ENCODE measurements at regions of chr1 and their contacts with region 1.

Region 1: GRCh38 chr1:18902523-18903290 is at the start of gene ALDH4A1:
- DNase-seq: peak; percentile 87 to 88
- H3K4me3 ChIP-seq: peak within 1 kb of the TSS; percentile 91 to 96 (median 93)
- H3K27ac ChIP-seq: peak within 1 kb of the TSS; percentile 99
- H3K4me1 ChIP-seq: peaks cover 0 to 5% (median 2%) of the 10 kb centered on the region in 4 experiments; a peak in 5 of 7 replicates
- H3K27me3 ChIP-seq: peaks cover 0 to 3% (median 0%) of the 10 kb centered on the region in 4 experiments; a peak in 4 of 7 replicates
- CTCF ChIP-seq: no peak
- EP300 ChIP-seq: peak in 1 of 2 experiments; percentile 99; a peak in 2 of 3 replicates
- POLR2A ChIP-seq: peak in 1 of 2 experiments; percentile 84; a peak in 2 of 3 replicates
- RAD21 ChIP-seq: no peak
- total RNA-seq, gene ALDH4A1: 29.4 and 30.3 TPM in 2 replicates

Region 2: GRCh38 chr1:18883636-18884418 is 18.9 kb before region 1 on chr1:
- CTCF ChIA-PET with region 1: interaction called, 131 read pairs
- POLR2A ChIA-PET with region 1: interaction called, 5 read pairs
- DNase-seq: peak; percentile 60 to 97
- H3K4me3 ChIP-seq: no peak overlapping the region
- H3K27ac ChIP-seq: no peak overlapping the region
- H3K4me1 ChIP-seq: peaks cover 0 to 6% (median 4%) of the 10 kb centered on the region in 4 experiments; a peak in 4 of 7 replicates
- H3K27me3 ChIP-seq: no peaks in the 10 kb centered on the region
- CTCF ChIP-seq: peak; percentile 84 to 97 (median 93)
- EP300 ChIP-seq: no peak
- POLR2A ChIP-seq: no peak
- RAD21 ChIP-seq: peak; percentile 86 to 92

Region 3: GRCh38 chr1:18941221-18942141 is 38.8 kb after region 1 on chr1:
- CTCF ChIA-PET with region 1: interaction called, 42 read pairs
- POLR2A ChIA-PET with region 1: interaction called, 3 read pairs
- DNase-seq: no peak
- H3K4me3 ChIP-seq: peak overlapping the region in 1 of 4 experiments; percentile 0; a peak in 1 of 8 replicates
- H3K27ac ChIP-seq: peak overlapping the region; percentile 61
- H3K4me1 ChIP-seq: peaks cover 7 to 34% (median 27%) of the 10 kb centered on the region in 4 experiments
- H3K27me3 ChIP-seq: no peaks in the 10 kb centered on the region
- CTCF ChIP-seq: no peak
- EP300 ChIP-seq: no peak
- POLR2A ChIP-seq: peak in 1 of 2 experiments; percentile 39; a peak in 1 of 3 replicates
- RAD21 ChIP-seq: no peak

Region 4: DNA sequence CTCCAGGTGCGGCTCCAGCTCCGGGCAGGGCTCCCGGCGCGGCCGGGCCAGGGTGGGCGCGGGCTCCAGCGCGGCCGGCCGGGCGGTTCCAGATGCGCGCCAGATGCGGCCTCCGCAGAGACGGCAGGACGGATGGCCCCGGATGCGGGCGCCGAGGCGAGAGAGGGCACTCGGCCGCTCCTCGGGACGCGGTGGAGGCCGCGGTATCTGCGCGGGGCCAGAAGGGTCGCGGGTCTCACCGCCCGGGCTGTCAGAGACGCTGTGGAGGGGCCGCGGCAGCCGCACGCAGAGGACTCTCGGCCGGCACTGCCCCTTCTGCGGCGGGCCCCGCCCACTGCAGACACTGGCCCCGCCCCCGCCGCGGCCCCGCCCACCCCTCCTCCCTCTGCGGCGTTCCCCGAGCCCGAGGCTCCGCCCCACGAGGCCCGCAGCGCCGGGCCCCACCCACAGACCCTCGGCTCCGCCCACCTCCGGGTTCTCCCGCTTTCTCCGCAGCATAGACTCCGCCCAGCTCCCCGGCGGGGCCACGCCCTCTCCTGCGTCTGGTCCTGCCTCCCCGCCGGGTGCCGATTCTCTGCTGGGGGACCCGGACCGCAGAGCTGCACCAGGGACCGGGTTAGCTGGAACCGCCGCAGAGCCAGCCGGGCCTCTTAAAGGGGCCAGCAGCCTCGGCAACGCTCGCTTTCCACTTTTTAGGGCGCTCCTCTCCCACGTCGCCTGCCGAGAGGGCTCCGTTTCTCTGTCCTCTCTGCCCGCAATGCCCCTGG is 53.8 kb after region 1 on chr1 and contains the start of gene IFFO2:
- CTCF ChIA-PET with region 1: interaction called, 40 read pairs
- POLR2A ChIA-PET with region 1: interaction called, 11 read pairs
- DNase-seq: peak; percentile 91 to 100
- H3K4me3 ChIP-seq: peak within 1 kb of the TSS; percentile 49 to 74 (median 64)
- H3K27ac ChIP-seq: no peak within 1 kb of the TSS
- H3K4me1 ChIP-seq: peaks cover 0 to 3% (median 2%) of the 10 kb centered on the region in 4 experiments; a peak in 4 of 7 replicates
- H3K27me3 ChIP-seq: peaks cover 5 to 40% (median 24%) of the 10 kb centered on the region in 4 experiments; a peak in 6 of 7 replicates
- CTCF ChIP-seq: no peak
- EP300 ChIP-seq: no peak
- POLR2A ChIP-seq: peak; percentile 41 to 67
- RAD21 ChIP-seq: no peak
- total RNA-seq, gene IFFO2: 8.7 and 10.4 TPM in 2 replicates

Region 5: DNA sequence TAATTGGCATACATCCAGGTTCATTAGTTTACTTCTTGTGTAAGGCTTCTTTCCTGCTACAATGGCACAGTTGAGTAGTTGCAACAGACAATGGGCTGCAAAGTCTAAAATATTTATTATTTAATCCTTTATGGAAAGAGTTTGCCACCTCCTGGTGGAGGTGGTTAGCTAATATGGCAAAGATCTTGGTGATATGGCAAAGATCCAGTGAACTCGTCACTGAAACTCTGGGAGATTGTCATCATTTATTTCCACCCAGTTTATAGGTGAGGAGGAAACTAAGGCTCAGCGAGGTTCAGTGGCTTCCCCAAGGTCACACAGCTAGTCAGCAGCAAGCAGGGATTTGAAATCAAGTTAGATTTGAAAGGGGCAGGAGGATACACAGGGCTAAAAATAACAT is 69.8 kb after region 1 on chr1:
- CTCF ChIA-PET with region 1: interaction called, 11 read pairs
- POLR2A ChIA-PET with region 1: no interaction called
- DNase-seq: no peak
- H3K4me3 ChIP-seq: no peak overlapping the region
- H3K27ac ChIP-seq: no peak overlapping the region
- H3K4me1 ChIP-seq: no peaks in the 10 kb centered on the region
- H3K27me3 ChIP-seq: no peaks in the 10 kb centered on the region
- CTCF ChIP-seq: 0 out of 4 replicates have a peak, but pooled peaks of 1 of the 3 experiments have one; percentile 21
- EP300 ChIP-seq: no peak
- POLR2A ChIP-seq: no peak
- RAD21 ChIP-seq: peak in 1 of 2 experiments; percentile 22; a peak in 2 of 4 replicates

Region 6: GRCh38 chr1:19067182-19067911 is 164.6 kb after region 1 on chr1:
- CTCF ChIA-PET with region 1: interaction called, 29 read pairs
- POLR2A ChIA-PET with region 1: no interaction called
- DNase-seq: no peak
- H3K4me3 ChIP-seq: no peak overlapping the region
- H3K27ac ChIP-seq: no peak overlapping the region
- H3K4me1 ChIP-seq: peaks cover 0 to 12% (median 5%) of the 10 kb centered on the region in 4 experiments; a peak in 5 of 7 replicates
- H3K27me3 ChIP-seq: no peaks in the 10 kb centered on the region
- CTCF ChIP-seq: peak in 1 of 3 experiments; percentile 35; a peak in 2 of 4 replicates
- EP300 ChIP-seq: no peak
- POLR2A ChIP-seq: no peak
- RAD21 ChIP-seq: peak in 1 of 2 experiments; percentile 23; a peak in 2 of 4 replicates